ENCODE measurements at regions of chr1 and their contacts with region 1.

Region 1: DNA sequence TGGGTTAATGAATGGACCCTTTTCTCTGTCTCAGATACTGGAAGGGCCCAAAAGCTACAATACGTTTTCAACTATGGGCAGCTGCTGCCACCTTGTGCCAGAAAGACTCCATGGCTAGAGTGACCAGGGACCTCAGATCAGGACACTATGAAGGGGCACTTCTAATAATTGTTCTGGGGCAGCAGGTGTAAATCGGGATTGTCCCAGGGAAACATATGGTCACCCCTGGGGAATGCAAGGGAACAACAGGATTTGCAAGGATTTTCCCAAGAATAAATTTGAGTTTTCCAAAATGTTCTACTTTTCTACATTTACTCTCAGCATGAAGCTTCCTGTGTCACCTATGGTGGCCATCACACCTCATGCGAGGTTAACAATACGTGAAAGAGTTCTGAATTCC is 12.0 kb upstream of the FCAMR start:
- DNase-seq: peak; percentile 75
- ATAC-seq: peak; percentile 82
- H3K4me3 Mint-ChIP-seq: no peak overlapping the region
- H3K27ac Mint-ChIP-seq: no peak overlapping the region
- H3K4me1 Mint-ChIP-seq: no peaks in the 10 kb centered on the region
- H3K27me3 Mint-ChIP-seq: peaks cover 32% of the 10 kb centered on the region

Region 2: DNA sequence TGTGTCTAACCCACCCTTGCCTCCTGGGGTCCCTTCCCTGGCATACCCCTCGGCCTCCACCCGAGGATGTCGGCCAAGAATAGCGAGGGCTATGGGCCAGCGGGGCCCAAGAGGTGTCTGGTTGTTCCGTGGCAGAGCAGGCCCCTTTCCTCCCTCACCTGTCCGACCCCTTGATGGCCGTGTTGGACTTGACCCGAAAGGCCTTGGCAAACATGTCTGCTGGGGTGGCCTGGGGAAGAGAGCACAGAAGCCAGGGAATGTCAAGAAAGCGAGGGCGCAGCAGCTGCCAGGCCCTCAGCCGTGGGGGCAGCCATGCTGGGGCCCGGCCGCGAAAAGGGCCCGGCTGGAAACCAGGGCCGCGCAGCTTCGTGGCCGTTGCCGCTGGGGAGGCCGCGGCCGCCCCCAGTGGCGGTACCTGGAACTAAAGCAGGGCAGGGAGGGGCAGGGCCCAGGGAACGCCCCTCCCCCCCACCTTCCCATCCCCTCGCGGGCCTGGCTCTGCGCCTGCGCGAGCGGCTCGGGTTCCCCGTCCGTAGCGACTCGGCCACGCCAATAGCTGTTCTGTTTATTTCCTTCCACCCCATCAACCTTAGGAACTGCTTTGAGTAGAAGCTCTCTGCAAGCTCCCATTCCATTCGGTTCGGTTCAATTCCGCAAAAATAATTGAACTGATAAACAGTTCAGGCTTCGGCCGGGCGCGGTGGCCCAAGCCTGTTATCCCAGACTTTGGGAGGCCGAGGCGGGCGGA is 369.9 kb before region 1 on chr1 and contains the start of gene EIF2D:
- CTCF ChIA-PET with region 1: interaction called, 10 read pairs
- POLR2A ChIA-PET with region 1: no interaction called
- DNase-seq: peak; percentile 95
- ATAC-seq: peak; percentile 98
- H3K4me3 Mint-ChIP-seq: peak within 1 kb of the TSS; percentile 94
- H3K27ac Mint-ChIP-seq: peak within 1 kb of the TSS; percentile 90
- H3K4me1 Mint-ChIP-seq: peaks cover 35% of the 10 kb centered on the region
- H3K27me3 Mint-ChIP-seq: peaks cover 10% of the 10 kb centered on the region
- total RNA-seq, gene EIF2D: 41.6 to 45.1 TPM

Region 3: GRCh38 chr1:206725109-206725963 is 256.9 kb before region 1 on chr1:
- CTCF ChIA-PET with region 1: interaction called, 53 read pairs
- POLR2A ChIA-PET with region 1: no interaction called
- DNase-seq: peak; percentile 81
- ATAC-seq: peak; percentile 66
- H3K4me3 Mint-ChIP-seq: no peak overlapping the region
- H3K27ac Mint-ChIP-seq: no peak overlapping the region
- H3K4me1 Mint-ChIP-seq: peaks cover 60% of the 10 kb centered on the region
- H3K27me3 Mint-ChIP-seq: no peaks in the 10 kb centered on the region

Region 4: DNA sequence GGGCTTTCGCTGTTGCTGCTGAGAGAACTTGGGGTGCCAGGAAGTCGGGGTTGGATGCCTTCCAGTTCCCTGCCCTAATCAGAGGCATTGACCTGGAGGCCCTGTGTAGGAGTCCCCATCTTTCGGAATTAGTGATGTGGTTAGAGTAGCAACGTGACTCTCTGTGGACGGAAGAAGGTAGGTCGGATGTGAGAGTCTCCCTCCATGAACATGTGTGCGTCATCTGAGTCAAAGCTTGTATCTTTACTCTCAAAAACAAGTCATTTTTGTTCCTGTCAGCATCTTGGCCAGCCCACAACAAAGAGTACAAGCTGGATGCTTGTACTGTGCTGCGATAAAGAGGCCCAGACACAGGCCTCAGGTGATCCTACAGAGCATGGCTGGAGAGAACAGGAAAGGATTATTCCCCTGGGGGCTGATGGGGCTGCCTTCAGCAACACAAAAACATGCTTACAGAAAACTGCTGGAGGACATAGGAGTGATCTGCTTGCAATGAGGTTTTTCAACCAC is 178.9 kb before region 1 on chr1:
- CTCF ChIA-PET with region 1: interaction called, 76 read pairs
- POLR2A ChIA-PET with region 1: no interaction called
- DNase-seq: peak; percentile 91
- ATAC-seq: peak; percentile 98
- H3K4me3 Mint-ChIP-seq: peak overlapping the region; percentile 1
- H3K27ac Mint-ChIP-seq: peak overlapping the region; percentile 83
- H3K4me1 Mint-ChIP-seq: peaks cover 70% of the 10 kb centered on the region
- H3K27me3 Mint-ChIP-seq: peaks cover 24% of the 10 kb centered on the region

Region 5: GRCh38 chr1:206905280-206906164 is 76.7 kb before region 1 on chr1:
- CTCF ChIA-PET with region 1: interaction called, 31 read pairs
- POLR2A ChIA-PET with region 1: no interaction called
- DNase-seq: no peak
- ATAC-seq: peak; percentile 28
- H3K4me3 Mint-ChIP-seq: peak overlapping the region; percentile 0
- H3K27ac Mint-ChIP-seq: peak overlapping the region; percentile 73
- H3K4me1 Mint-ChIP-seq: peaks cover 45% of the 10 kb centered on the region
- H3K27me3 Mint-ChIP-seq: no peaks in the 10 kb centered on the region

Region 6: DNA sequence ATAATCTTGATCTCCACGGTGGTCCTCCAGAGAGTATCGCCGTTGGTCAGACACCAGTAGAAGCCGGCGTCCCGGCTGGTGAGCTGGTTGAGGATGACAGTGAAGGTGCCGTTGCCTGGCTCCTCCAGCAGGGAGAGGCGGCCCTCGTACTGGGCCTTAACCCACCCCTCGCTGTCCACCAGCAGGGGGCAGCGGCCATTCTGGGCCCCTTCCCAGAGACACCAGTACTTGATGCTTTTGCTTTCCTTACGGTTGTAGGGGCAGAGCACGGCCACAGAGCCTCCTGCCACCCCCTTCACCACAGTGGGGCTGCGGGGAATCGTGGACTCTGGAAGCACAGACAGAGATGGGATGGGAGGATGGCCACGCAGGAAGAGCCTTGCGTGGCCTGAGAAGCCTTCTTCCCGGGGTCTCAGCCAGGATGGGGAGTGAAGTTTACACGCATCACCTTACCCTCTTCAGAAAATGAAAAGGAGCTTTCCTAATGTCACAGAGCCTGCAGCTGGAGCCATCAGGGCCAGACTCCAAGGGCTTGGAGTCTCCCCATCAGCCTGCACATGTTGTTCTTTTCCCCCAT is 46.6 kb before region 1 on chr1:
- CTCF ChIA-PET with region 1: interaction called, 281 read pairs
- POLR2A ChIA-PET with region 1: interaction called, 3 read pairs
- DNase-seq: peak; percentile 64
- ATAC-seq: peak; percentile 77
- H3K4me3 Mint-ChIP-seq: no peak overlapping the region
- H3K27ac Mint-ChIP-seq: no peak overlapping the region
- H3K4me1 Mint-ChIP-seq: peaks cover 34% of the 10 kb centered on the region
- H3K27me3 Mint-ChIP-seq: peaks cover 2% of the 10 kb centered on the region

Region 7: DNA sequence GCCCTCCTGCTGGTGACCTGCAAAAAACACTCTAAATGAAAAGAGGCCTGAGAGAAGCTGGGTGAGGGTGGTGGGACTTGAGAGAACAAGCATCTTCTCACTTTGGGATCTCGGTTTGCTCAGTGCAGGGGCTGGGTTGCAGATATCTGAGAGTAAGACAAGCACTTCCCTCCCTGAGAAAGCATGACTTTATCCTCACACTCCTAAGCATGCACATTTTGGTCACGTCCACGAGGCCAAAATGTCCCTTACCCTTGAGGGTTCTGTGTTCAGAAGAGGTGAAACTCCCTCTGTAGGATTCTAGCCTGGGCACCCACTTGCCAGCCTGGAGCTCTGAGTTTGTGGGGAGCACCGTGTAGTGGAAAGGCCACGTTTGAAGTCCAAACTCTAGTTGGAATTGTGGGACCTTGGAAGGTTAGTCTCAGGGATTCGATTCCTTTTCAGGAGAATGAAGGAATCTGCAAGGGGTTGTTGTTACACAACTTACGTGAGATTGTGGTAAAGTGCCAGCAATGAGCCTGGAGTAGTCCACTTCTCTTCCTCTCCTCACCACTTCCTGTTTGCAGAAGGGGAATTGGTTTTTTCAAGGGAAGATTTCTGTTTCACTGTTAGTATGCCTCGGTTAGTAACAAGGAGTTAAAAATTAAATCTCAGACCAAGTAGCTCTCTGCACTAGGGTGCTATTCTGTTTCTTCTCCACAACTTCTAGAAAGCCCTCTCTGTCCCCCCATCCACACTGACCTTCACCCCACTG is 14.9 kb before region 1 on chr1:
- CTCF ChIA-PET with region 1: interaction called, 71 read pairs
- POLR2A ChIA-PET with region 1: no interaction called
- DNase-seq: no peak
- ATAC-seq: peak; percentile 57
- H3K4me3 Mint-ChIP-seq: peak overlapping the region; percentile 12
- H3K27ac Mint-ChIP-seq: peak overlapping the region; percentile 33
- H3K4me1 Mint-ChIP-seq: peaks cover 48% of the 10 kb centered on the region
- H3K27me3 Mint-ChIP-seq: peaks cover 26% of the 10 kb centered on the region

Measured in activated CD8-positive, alpha-beta T cell treated with anti-CD3 and anti-CD28 coated beads, Interleukin-2, amount 10 ng/mL, durations not matched to agents 7 days and 5 days (primary cell).